Astrocyte of the cerebellum (primary cell): ENCODE measurements at regions of chr19 and their contacts with region 1.

Region 1: GRCh38 chr19:46821498-46822409 is 28.9 kb downstream of the AP2S1 start:
- DNase-seq: no peak
- H3K4me3 ChIP-seq: no peak overlapping the region
- CTCF ChIP-seq: no peak

Region 2: GRCh38 chr19:46674416-46675183 is 147.2 kb before region 1 on chr19:
- in situ Hi-C with region 1: no loop called
- DNase-seq: no peak
- H3K4me3 ChIP-seq: no peak overlapping the region
- CTCF ChIP-seq: no peak

Region 3: GRCh38 chr19:46746281-46747013 is 75.3 kb before region 1 on chr19 and contains the start of gene STRN4:
- in situ Hi-C with region 1: loop called (anchors 10 kb)
- DNase-seq: no peak
- H3K4me3 ChIP-seq: peak within 1 kb of the TSS; percentile 76
- CTCF ChIP-seq: no peak

Region 4: GRCh38 chr19:46756544-46756888 is 65.2 kb before region 1 on chr19:
- in situ Hi-C with region 1: no loop called
- DNase-seq: no peak
- H3K4me3 ChIP-seq: no peak overlapping the region
- CTCF ChIP-seq: no peak

Region 5: DNA sequence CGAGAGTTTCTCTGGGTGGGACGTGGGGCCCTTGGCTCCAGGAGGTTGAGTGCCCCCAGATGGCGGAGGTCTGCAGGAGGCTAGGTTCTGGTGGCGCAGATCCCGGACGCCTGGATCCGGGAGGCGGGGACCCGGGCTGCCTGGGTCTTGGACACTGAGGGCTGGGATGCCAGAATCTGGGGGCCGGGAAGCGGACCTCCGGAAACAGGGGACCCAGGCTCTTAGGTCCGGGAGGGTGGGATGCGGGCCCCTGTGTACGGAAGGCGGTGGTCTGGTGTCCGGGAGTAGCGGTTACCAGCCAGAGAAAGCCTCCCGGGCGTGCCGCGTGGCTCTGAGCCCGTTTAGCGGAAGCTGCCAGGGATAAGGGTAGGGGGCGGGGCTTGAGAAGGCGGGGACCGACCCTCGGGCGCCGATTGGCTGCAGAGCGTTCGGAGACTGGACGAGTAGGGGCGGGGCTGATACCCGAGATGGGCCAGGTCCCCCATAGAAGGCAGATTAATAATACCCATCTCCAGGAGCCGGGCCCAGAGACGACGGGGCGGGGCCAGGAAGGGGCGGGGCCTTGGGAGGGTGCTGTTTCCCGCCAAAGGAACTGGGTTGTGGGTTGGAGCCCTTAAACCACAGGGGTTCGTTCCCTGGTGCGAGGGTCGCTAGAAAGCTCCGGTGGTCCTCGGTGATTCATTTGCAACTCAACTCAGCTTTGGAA is 33.3 kb before region 1 on chr19 and contains the start of gene SLC1A5:
- in situ Hi-C with region 1: loop called (anchors 5 kb)
- DNase-seq: peak; percentile 85
- H3K4me3 ChIP-seq: peak within 1 kb of the TSS; percentile 57
- CTCF ChIP-seq: no peak